CD8-positive, alpha-beta memory T cell (primary cell): ENCODE measurements at regions of chr5 and their contacts with region 1.

Region 1: DNA sequence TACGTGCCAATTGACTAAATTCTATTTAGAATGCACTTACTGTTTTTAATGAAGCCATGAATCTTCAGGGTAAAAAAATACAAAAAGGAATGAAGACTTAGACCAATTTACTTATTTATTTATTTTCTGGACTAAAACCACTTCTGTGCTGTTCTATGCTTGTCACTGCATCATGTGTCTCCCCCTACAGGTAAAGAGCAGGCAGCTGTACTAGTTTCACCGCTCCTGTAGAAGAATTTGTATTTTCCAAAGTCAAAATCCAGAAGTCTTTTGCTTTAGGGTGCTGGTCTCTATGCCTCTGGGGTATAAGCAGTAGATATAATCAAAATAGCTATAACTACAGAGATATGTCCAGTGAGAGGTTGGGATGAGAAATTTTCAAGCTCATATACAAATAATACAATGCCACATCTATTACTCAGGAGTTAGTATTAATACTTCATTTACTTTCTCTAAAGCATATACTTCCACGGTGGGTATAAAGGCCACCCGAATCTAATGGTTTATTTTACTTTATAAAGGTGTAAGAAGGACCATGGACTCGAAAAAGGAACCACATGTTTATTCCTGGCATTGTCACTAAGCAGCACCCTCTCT is 591.5 kb downstream of the RAB3C start:
- DNase-seq: peak in 4 of 5 donors; percentile 3 to 59 (median 46)
- H3K4me3 ChIP-seq: no peak overlapping the region
- H3K4me3 Mint-ChIP-seq: no peak overlapping the region
- H3K27ac ChIP-seq: no peak overlapping the region
- H3K27ac Mint-ChIP-seq: no peak overlapping the region
- H3K4me1 ChIP-seq: no peaks in the 10 kb centered on the region
- H3K4me1 Mint-ChIP-seq: no peaks in the 10 kb centered on the region
- H3K27me3 ChIP-seq: no peaks in the 10 kb centered on the region
- H3K27me3 Mint-ChIP-seq: peaks cover 0 to 3% of the 10 kb centered on the region in 2 donors

Region 2: DNA sequence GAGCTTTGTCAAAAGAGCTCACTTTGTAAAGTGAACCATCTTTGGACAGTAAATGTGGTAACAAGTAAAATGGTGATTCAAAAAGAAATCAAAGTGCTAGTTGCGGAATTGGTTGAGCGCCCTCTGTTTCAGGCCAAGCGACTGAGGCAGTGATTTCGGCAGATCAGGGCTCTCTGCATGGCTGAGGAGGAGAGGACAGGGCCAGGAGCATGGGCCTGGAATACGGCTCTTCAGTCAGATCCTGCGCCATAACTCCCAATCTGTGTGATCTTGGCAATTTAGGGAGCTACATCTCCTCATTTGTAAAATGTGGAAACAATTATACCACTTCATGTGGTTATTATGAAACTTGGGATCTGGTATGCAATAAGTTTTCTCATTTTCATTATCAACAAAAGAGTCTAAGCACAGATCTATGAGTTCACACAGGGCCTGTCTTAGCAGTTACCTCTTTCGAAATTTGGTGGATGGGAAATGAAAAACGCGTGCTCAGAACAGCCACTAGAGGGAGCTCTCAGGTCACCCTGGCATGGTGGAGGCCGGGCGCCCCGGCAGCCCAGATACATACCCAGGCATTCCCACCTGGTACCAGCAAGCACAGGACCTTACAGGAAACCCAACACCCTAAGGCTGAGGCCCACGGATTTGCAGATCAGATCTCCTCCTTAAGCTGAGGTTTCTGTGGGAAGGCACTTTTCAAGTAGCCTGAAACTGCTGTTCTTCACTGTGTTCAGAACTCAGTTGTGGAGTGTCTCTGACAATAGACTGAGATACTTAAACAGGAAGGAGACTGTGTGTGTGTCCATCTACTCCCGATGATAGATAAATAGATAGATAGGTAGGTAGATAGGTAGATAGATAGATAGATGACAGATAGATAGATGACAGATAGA is 287.8 kb before region 1 on chr5:
- CTCF ChIA-PET with region 1: interaction called, 35 read pairs
- POLR2A ChIA-PET with region 1: no interaction called
- DNase-seq: peak; percentile 31 to 67 (median 50)
- H3K4me3 ChIP-seq: no peak overlapping the region
- H3K4me3 Mint-ChIP-seq: peak overlapping the region in 1 of 7 donors; percentile 27
- H3K27ac ChIP-seq: no peak overlapping the region
- H3K27ac Mint-ChIP-seq: peak overlapping the region in 2 of 8 donors; percentile 15 to 56
- H3K4me1 ChIP-seq: peaks cover 10% of the 10 kb centered on the region
- H3K4me1 Mint-ChIP-seq: peaks cover 11 to 19% (median 18%) of the 10 kb centered on the region in 3 donors
- H3K27me3 ChIP-seq: no peaks in the 10 kb centered on the region
- H3K27me3 Mint-ChIP-seq: peaks cover 4 to 22% of the 10 kb centered on the region in 2 donors

Region 3: GRCh38 chr5:58893551-58893950 is 280.8 kb before region 1 on chr5:
- CTCF ChIA-PET with region 1: interaction called, 35 read pairs
- POLR2A ChIA-PET with region 1: no interaction called
- DNase-seq: no peak
- H3K4me3 ChIP-seq: no peak overlapping the region
- H3K4me3 Mint-ChIP-seq: no peak overlapping the region
- H3K27ac ChIP-seq: no peak overlapping the region
- H3K27ac Mint-ChIP-seq: no peak overlapping the region
- H3K4me1 ChIP-seq: no peaks in the 10 kb centered on the region
- H3K4me1 Mint-ChIP-seq: peaks cover 2 to 7% (median 5%) of the 10 kb centered on the region in 3 donors
- H3K27me3 ChIP-seq: no peaks in the 10 kb centered on the region
- H3K27me3 Mint-ChIP-seq: peaks cover 2 to 3% of the 10 kb centered on the region in 2 donors

Region 4: GRCh38 chr5:59008816-59009473 is 165.4 kb before region 1 on chr5:
- CTCF ChIA-PET with region 1: no interaction called
- POLR2A ChIA-PET with region 1: no interaction called
- DNase-seq: no peak
- H3K4me3 ChIP-seq: no peak overlapping the region
- H3K4me3 Mint-ChIP-seq: peak overlapping the region in 1 of 7 donors; percentile 31
- H3K27ac ChIP-seq: no peak overlapping the region
- H3K27ac Mint-ChIP-seq: peak overlapping the region in 3 of 8 donors; percentile 2 to 52 (median 3)
- H3K4me1 ChIP-seq: no peaks in the 10 kb centered on the region
- H3K4me1 Mint-ChIP-seq: peaks cover 36 to 76% (median 75%) of the 10 kb centered on the region in 3 donors
- H3K27me3 ChIP-seq: no peaks in the 10 kb centered on the region
- H3K27me3 Mint-ChIP-seq: peaks cover 0 to 1% of the 10 kb centered on the region in 2 donors

Region 5: GRCh38 chr5:59039296-59040023 is 134.9 kb before region 1 on chr5:
- CTCF ChIA-PET with region 1: interaction called, 73 read pairs
- POLR2A ChIA-PET with region 1: no interaction called
- DNase-seq: peak; percentile 80 to 95 (median 92)
- H3K4me3 ChIP-seq: peak overlapping the region; percentile 76
- H3K4me3 Mint-ChIP-seq: peak overlapping the region; percentile 86 to 98 (median 92)
- H3K27ac ChIP-seq: peak overlapping the region; percentile 62
- H3K27ac Mint-ChIP-seq: peak overlapping the region; percentile 91 to 99 (median 98)
- H3K4me1 ChIP-seq: peaks cover 46% of the 10 kb centered on the region
- H3K4me1 Mint-ChIP-seq: peaks cover 47 to 70% (median 56%) of the 10 kb centered on the region in 3 donors
- H3K27me3 ChIP-seq: no peaks in the 10 kb centered on the region
- H3K27me3 Mint-ChIP-seq: peaks cover 0 to 1% of the 10 kb centered on the region in 2 donors

Region 6: GRCh38 chr5:59126708-59127573 is 47.4 kb before region 1 on chr5:
- CTCF ChIA-PET with region 1: interaction called, 18 read pairs
- POLR2A ChIA-PET with region 1: no interaction called
- DNase-seq: no peak
- H3K4me3 ChIP-seq: peak overlapping the region; percentile 49
- H3K4me3 Mint-ChIP-seq: no peak overlapping the region
- H3K27ac ChIP-seq: peak overlapping the region; percentile 49
- H3K27ac Mint-ChIP-seq: no peak overlapping the region
- H3K4me1 ChIP-seq: peaks cover 65% of the 10 kb centered on the region
- H3K4me1 Mint-ChIP-seq: peaks cover 6 to 13% (median 12%) of the 10 kb centered on the region in 3 donors
- H3K27me3 ChIP-seq: no peaks in the 10 kb centered on the region
- H3K27me3 Mint-ChIP-seq: no peaks in the 10 kb centered on the region

Region 7: DNA sequence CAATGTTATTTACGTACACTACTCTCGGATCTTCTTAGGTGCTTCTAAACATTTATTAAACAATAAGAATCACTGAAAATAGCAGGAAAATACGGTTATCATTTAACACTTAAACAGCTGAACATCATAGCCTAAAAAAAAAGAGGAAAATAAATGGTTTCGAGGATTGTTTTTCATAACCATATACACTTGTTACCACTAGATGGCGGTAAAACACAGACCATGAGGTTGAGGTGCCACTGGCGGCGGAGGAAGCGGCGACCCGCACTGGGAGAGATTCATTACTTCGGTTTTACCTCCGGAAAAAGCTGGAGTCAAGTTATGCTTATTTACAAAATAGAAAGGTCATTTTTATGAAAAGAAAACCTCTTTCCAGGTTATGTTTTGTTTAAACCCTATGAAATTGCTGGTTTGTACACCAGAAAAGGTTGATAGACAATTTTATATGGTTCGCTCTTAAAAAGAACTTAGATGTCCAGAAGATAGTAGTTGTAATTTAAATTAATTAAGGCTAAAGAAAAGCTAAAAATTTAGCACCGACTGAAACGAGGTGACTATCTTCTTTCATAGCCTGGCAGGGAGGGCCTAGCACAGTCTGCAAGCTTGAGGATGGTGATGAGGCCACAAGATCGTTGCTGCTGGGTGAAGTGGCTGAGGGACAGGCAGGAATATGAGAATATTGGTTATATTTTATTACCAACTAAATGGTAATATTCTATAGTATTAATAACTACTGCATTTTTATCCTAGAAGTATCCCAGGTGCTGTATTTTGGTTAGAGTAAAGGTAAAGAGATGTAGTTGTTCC is 14.3 kb after region 1 on chr5:
- CTCF ChIA-PET with region 1: interaction called, 23 read pairs
- POLR2A ChIA-PET with region 1: no interaction called
- DNase-seq: peak; percentile 31 to 75 (median 58)
- H3K4me3 ChIP-seq: no peak overlapping the region
- H3K4me3 Mint-ChIP-seq: peak overlapping the region in 1 of 7 donors; percentile 9
- H3K27ac ChIP-seq: no peak overlapping the region
- H3K27ac Mint-ChIP-seq: no peak overlapping the region
- H3K4me1 ChIP-seq: no peaks in the 10 kb centered on the region
- H3K4me1 Mint-ChIP-seq: peaks cover 3 to 6% (median 5%) of the 10 kb centered on the region in 3 donors
- H3K27me3 ChIP-seq: no peaks in the 10 kb centered on the region
- H3K27me3 Mint-ChIP-seq: peaks cover 4 to 22% of the 10 kb centered on the region in 2 donors